AG04450 (cell line): ENCODE measurements at regions of chr5 and their contacts with region 1.

Region 1: GRCh38 chr5:172059661-172060100 is 53.2 kb upstream of the FBXW11 start:
- DNase-seq: no peak
- H3K4me3 ChIP-seq: no peak overlapping the region
- H3K27ac ChIP-seq: no peak overlapping the region
- H3K27me3 ChIP-seq: no peaks in the 10 kb centered on the region
- CTCF ChIP-seq: peak; percentile 61

Region 2: GRCh38 chr5:172071289-172071875 is 11.7 kb after region 1 on chr5:
- CTCF ChIA-PET with region 1: interaction called, 15 read pairs
- POLR2A ChIA-PET with region 1: interaction called, 5 read pairs
- DNase-seq: no peak
- H3K4me3 ChIP-seq: no peak overlapping the region
- H3K27ac ChIP-seq: no peak overlapping the region
- H3K27me3 ChIP-seq: no peaks in the 10 kb centered on the region
- CTCF ChIP-seq: no peak

Region 3: DNA sequence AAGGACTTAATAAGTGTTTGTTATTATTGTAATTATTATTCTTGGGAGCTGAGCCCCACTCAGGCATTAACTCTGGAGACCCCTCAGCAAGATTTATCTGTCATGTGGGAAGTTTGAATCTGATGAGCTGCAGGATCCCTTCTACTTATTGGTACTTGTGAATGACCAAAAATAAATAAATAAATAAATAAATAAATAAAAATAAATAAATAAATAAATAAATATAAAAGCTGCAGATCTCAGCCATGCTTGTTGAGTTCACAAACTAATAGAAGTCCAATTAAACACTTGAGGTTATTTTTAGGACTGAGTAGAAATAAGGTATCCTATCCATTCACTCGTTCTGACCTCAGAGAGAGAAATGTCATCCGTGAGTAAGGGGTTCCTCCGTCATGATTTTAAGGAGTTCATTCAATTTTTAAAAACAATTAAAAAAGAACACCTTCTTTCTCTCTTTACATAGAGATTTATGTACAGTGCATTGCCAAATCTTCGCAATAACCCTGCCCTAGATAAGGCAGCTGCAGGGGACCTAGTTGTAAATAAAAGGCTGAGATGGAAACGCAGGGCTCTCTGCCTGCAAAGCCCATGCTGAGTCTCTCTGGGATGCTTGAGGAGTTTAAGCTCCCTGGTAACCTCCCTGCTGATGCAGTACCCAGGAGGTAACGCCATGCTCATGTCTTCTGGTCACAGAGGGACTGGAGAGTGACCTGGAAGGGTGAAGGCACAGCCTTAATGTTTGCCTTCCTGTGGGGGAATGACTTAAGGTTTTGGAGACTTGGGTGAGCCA is 135.5 kb after region 1 on chr5:
- CTCF ChIA-PET with region 1: no interaction called
- POLR2A ChIA-PET with region 1: no interaction called
- DNase-seq: no peak
- H3K4me3 ChIP-seq: no peak overlapping the region
- H3K27ac ChIP-seq: no peak overlapping the region
- H3K27me3 ChIP-seq: no peaks in the 10 kb centered on the region
- CTCF ChIP-seq: no peak